Gastrocnemius medialis (tissue), 4 donors: ENCODE measurements at regions of chr5 and their contacts with region 1.

Region 1: GRCh38 chr5:146446853-146447733 is at the start of gene TCERG1:
- DNase-seq: peak; percentile 99 to 100
- ATAC-seq: peak; percentile 99
- H3K4me3 ChIP-seq: peak within 1 kb of the TSS; percentile 79 to 100 (median 91)
- H3K27ac ChIP-seq: peak within 1 kb of the TSS; percentile 90 to 96 (median 94)
- H3K4me1 ChIP-seq: peaks cover 35 to 40% of the 10 kb centered on the region in 2 donors
- H3K27me3 ChIP-seq: no peaks in the 10 kb centered on the region
- CTCF ChIP-seq: peak; percentile 60 to 83 (median 76)
- POLR2A ChIP-seq: peak; percentile 24 to 36
- total RNA-seq, gene TCERG1: 18.0 to 53.9 (median 41.8) TPM

Region 2: GRCh38 chr5:146188358-146188757 is 258.7 kb before region 1 on chr5:
- in situ Hi-C with region 1: loop called in 3 of 4 experiments (anchors 25 kb)
- intact Hi-C with region 1: no loop called
- DNase-seq: no peak
- ATAC-seq: no peak
- H3K4me3 ChIP-seq: no peak overlapping the region
- H3K27ac ChIP-seq: no peak overlapping the region
- H3K4me1 ChIP-seq: no peaks in the 10 kb centered on the region
- H3K27me3 ChIP-seq: no peaks in the 10 kb centered on the region
- CTCF ChIP-seq: no peak
- POLR2A ChIP-seq: no peak